Dendritic cell treated with granulocyte-macrophage colony-stimulating factor and Interleukin-4, amounts not matched to agents 40 ng/mL and 50 ng/mL, for 4 days (primary cell): ENCODE measurements at regions of chr6 and their contacts with region 1.

Region 1: DNA sequence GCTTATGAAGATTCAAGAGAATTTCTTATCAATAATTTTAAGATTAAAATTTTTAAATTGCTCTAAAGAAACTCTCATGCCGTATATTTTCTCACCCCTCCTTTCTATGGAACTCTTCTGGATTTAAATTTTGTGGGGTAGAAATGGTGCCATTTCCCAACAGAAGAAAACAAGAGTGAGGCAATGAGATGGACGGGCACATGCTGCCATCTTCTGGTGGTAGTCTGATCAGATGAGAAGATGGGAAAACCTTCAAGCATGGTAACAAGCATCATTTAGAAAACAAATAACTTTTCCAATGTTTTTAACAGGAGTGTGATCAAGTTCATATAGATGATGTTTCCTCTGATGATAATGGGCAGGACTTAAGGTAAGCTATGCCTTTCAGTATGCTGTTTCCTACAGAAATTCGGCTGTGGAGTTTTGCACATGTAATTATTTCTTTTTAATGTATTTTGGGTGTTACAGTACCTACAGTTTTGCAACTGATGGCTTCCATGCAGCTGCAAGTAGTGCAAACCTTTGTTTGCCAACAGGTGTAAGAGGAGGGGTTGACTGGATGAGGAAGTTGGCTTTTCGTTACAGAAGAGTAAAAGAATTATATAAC is 271.4 kb downstream of the EYA4 start:
- H3K4me3 Mint-ChIP-seq: no peak overlapping the region
- H3K27ac Mint-ChIP-seq: no peak overlapping the region
- H3K4me1 Mint-ChIP-seq: no peaks in the 10 kb centered on the region
- H3K27me3 Mint-ChIP-seq: no peaks in the 10 kb centered on the region

Region 2: DNA sequence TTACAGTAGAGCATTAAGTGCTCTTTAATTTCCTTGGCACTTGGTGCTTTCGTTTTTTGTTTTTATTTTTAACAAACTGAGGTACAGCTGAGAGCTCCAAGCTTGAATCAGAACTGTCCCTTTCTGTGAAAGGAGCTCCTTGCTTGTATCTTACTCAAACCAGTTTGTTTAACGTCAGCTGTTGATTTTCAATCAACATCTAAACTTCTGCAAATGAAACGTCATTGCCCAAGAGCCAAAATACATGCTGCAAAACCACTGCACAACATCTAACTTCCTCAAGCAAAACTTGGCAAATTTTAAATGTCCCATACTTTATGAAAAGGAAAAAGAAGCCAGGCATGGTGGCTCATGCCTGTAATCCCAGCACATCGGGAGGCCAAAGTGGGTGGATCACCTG is 770.0 kb before region 1 on chr6:
- intact Hi-C with region 1: no loop called
- H3K4me3 Mint-ChIP-seq: no peak overlapping the region
- H3K27ac Mint-ChIP-seq: peak overlapping the region; percentile 65
- H3K4me1 Mint-ChIP-seq: peaks cover 34% of the 10 kb centered on the region
- H3K27me3 Mint-ChIP-seq: no peaks in the 10 kb centered on the region

Region 3: DNA sequence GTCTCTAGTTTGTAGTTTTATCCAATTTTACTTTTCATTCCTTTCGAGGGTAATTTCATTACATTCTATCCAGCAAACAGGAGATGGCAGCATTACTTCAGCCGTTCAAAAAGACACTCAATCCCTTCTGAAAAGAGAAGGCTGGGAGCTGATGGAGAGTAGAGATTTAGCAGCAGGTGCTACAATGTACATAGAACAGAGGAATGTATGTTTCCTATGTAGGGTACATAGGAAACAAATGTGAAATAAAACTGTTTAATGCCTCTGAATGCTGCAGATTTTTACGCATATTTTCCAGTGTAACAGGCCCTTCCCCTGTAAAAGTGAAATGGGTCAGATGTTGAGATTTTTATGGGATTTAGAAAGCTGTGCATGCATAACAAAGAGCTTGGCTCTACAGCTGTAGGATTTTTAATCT is 682.2 kb before region 1 on chr6:
- intact Hi-C with region 1: loop called (anchors 5 kb)
- H3K4me3 Mint-ChIP-seq: no peak overlapping the region
- H3K27ac Mint-ChIP-seq: no peak overlapping the region
- H3K4me1 Mint-ChIP-seq: peaks cover 4% of the 10 kb centered on the region
- H3K27me3 Mint-ChIP-seq: peaks cover 4% of the 10 kb centered on the region